ENCODE measurements at regions of chr22 and their contacts with region 1.

Region 1: GRCh38 chr22:29877620-29878019 is 5.4 kb upstream of the MTMR3 start:
- DNase-seq: no peak
- H3K4me3 ChIP-seq: no peak overlapping the region
- H3K27ac ChIP-seq: no peak overlapping the region
- H3K4me1 ChIP-seq: no peaks in the 10 kb centered on the region
- H3K27me3 ChIP-seq: no peaks in the 10 kb centered on the region
- CTCF ChIP-seq: no peak

Region 2: GRCh38 chr22:29647954-29648737 is 229.5 kb before region 1 on chr22:
- CTCF ChIA-PET with region 1: no interaction called
- POLR2A ChIA-PET with region 1: no interaction called
- intact Hi-C with region 1: no loop called
- DNase-seq: no peak
- H3K4me3 ChIP-seq: no peak overlapping the region
- H3K27ac ChIP-seq: no peak overlapping the region
- H3K4me1 ChIP-seq: no peaks in the 10 kb centered on the region
- H3K27me3 ChIP-seq: no peaks in the 10 kb centered on the region
- CTCF ChIP-seq: no peak

Region 3: GRCh38 chr22:29925402-29925801 is 47.8 kb after region 1 on chr22:
- CTCF ChIA-PET with region 1: no interaction called
- POLR2A ChIA-PET with region 1: interaction called, 17 read pairs
- intact Hi-C with region 1: no loop called
- DNase-seq: no peak
- H3K4me3 ChIP-seq: no peak overlapping the region
- H3K27ac ChIP-seq: no peak overlapping the region
- H3K4me1 ChIP-seq: no peaks in the 10 kb centered on the region
- H3K27me3 ChIP-seq: no peaks in the 10 kb centered on the region
- CTCF ChIP-seq: no peak

Region 4: DNA sequence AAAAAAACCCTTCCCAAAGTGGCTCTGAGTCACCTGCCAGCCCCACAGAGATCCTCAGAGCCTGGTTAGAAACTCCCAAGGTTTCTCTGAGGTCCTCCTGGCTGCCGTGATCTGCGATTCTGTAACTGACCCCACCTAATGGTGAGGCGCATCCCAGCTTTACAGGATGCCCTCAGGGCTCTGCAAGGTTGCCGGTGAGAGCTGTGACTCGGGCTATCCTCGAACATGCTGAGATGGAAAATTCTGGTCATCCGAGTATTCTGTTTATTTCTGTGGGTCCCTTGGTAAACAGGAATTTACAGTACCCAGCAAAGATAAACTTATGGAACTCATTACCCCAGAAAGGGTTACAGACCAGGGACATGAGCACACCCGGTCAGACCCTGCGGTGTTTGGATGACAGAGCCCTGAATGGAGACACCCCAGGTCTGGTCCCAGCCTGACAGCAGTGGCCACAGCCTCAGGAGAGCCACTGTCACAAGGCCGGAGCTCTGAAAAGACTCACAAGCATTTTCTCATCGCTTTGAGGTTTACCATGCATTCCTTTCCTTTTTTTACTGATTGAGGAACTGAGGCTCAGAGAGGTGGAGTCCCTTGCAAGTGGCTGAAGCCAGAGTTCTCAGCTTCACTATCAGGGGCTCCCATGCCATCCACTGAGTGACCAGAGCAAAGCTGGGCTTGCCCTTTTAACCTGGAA is 346.7 kb after region 1 on chr22:
- CTCF ChIA-PET with region 1: no interaction called
- POLR2A ChIA-PET with region 1: no interaction called
- intact Hi-C with region 1: no loop called
- DNase-seq: peak; percentile 71 to 94
- H3K4me3 ChIP-seq: no peak overlapping the region
- H3K27ac ChIP-seq: peak overlapping the region; percentile 89
- H3K4me1 ChIP-seq: peaks cover 68% of the 10 kb centered on the region
- H3K27me3 ChIP-seq: no peaks in the 10 kb centered on the region
- CTCF ChIP-seq: no peak; the same call in 1 of the 2 replicates

Region 5: DNA sequence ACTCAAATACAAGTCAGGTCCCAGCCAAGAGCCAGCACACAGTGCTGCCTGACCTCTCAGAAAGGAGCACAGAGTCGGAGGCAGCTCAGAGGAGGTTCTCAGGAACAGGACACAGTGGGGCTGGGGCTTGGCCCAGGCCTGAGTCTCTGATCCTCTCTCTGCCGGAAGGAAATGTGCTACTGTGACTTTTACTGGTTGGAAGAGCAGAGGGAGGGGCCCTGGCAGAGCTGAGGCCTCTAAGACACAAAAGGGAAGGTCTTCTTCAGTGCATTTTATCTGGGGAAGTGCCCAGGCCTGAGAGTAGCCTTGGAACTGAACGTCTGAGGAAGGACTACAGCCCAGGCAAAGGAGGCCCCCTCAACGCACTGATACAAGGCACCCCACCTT is 427.9 kb after region 1 on chr22:
- CTCF ChIA-PET with region 1: no interaction called
- POLR2A ChIA-PET with region 1: no interaction called
- intact Hi-C with region 1: no loop called
- DNase-seq: no peak
- H3K4me3 ChIP-seq: no peak overlapping the region; the same call in 1 of the 2 replicates
- H3K27ac ChIP-seq: peak overlapping the region; percentile 95
- H3K4me1 ChIP-seq: peaks cover 97% of the 10 kb centered on the region
- H3K27me3 ChIP-seq: no peaks in the 10 kb centered on the region
- CTCF ChIP-seq: no peak

Measured in PC-9 (cell line).